H1 (cell line): ENCODE measurements at regions of chr20 and their contacts with region 1.

Region 1: DNA sequence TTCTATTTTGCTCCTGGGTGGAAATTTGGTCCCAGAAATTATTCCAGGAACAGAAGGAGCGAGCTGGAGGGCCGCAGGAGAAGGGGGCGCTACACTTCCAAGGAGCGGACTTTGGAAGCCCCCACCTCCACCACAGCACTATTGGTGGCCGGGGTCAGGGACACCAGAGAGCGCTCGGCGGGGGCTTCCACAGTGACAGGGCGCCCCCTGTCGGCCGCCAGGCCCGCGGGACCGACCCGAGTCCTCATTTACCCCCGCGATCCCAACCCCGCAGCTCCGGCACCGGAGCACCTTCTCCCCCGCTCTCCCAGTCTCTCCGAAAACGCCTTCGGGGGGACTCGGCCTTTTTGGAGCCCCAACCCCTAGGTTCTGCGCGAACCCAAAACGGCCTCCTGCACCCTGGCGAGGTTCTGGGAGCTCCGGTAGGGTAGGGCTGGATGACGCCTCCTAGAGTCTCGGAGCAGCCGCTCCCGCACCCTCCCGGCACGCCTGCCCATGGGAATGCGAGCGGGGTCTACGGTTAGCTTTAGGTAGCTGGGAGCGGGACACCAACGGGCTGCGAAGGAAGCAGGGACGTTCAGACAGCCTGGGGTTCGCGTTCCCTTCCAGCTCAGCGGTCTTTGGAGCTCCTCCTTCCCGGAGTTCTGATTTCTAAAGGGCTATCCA is 2.4 kb upstream of the FOXA2 start:
- DNase-seq: peak in 1 of 2 experiments; percentile 90
- H3K4me3 ChIP-seq: peak overlapping the region in 3 of 4 experiments; percentile 2 to 52 (median 19); a peak in 3 of 8 replicates
- H3K27ac ChIP-seq: no peak overlapping the region
- H3K4me1 ChIP-seq: peaks cover 9 to 21% (median 14%) of the 10 kb centered on the region in 4 experiments
- H3K27me3 ChIP-seq: peaks cover 71 to 89% (median 86%) of the 10 kb centered on the region in 4 experiments
- CTCF ChIP-seq: peak; percentile 76 to 83 (median 83)
- EP300 ChIP-seq: no peak
- POLR2A ChIP-seq: no peak
- RAD21 ChIP-seq: peak; percentile 71 to 78

Region 2: DNA sequence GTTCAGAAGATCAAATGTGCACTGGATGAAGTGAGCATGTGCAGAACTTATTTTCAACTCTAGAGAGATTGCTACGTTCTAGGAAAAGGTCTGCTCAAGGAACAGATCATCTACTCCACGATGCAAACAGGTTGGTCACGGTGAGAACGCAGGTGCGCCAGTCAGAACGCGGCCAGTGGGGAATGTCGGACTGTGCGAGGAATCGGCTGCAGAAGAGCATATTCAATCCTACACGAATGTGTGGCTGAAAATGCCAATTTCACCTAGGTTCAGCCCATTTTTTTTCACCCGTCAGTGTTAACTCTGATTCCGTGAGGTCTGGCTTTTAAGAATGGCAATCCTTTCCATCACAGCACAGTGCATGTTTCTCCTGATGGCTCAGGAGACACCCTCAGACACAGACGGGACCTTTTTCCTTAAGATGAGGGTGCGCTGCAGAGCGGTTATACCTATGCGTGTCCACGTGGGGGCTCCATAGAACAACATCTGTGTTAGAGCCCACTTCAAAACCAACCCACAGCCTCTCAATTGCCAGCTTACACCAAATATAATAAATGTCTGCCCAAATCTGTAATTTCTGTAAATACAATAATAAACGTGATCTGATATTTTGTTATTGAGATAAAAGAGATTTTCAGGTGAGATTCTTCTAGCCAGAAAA is 252.8 kb before region 1 on chr20:
- CTCF ChIA-PET with region 1: interaction called, 82 read pairs
- POLR2A ChIA-PET with region 1: no interaction called
- DNase-seq: peak in 1 of 2 experiments; percentile 69
- H3K4me3 ChIP-seq: no peak overlapping the region
- H3K27ac ChIP-seq: no peak overlapping the region
- H3K4me1 ChIP-seq: no peaks in the 10 kb centered on the region
- H3K27me3 ChIP-seq: peaks cover 0 to 3% (median 0%) of the 10 kb centered on the region in 4 experiments; a peak in 2 of 7 replicates
- CTCF ChIP-seq: peak; percentile 68 to 74 (median 71)
- EP300 ChIP-seq: no peak
- POLR2A ChIP-seq: no peak
- RAD21 ChIP-seq: peak; percentile 83 to 84

Region 3: GRCh38 chr20:22462975-22463914 is 123.5 kb before region 1 on chr20:
- CTCF ChIA-PET with region 1: interaction called, 36 read pairs
- POLR2A ChIA-PET with region 1: no interaction called
- DNase-seq: no peak
- H3K4me3 ChIP-seq: no peak overlapping the region
- H3K27ac ChIP-seq: no peak overlapping the region
- H3K4me1 ChIP-seq: peaks cover 3 to 8% (median 4%) of the 10 kb centered on the region in 4 experiments
- H3K27me3 ChIP-seq: peaks cover 6 to 34% (median 19%) of the 10 kb centered on the region in 4 experiments
- CTCF ChIP-seq: no peak
- EP300 ChIP-seq: no peak
- POLR2A ChIP-seq: no peak
- RAD21 ChIP-seq: no peak

Region 4: DNA sequence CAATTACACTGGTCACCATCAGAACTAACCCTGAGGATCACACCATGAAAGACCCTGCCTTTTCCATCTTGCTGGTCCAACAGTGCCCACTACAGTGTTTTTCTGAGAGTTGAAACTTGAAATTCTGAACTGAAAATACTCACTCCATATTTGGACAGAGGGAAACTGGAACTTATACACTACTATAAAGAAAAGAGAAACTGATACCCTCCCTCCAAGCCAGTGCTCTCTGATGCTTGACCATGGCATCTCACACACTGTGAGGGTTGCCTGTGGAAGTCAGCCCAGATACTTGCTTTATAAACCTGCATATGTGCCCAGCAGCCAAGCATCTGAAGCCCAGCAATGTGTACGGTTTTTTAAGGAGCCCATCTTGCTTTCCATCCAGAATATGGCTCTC is 111.1 kb before region 1 on chr20:
- CTCF ChIA-PET with region 1: no interaction called
- POLR2A ChIA-PET with region 1: no interaction called
- DNase-seq: no peak
- H3K4me3 ChIP-seq: no peak overlapping the region
- H3K27ac ChIP-seq: no peak overlapping the region
- H3K4me1 ChIP-seq: peaks cover 0 to 2% (median 0%) of the 10 kb centered on the region in 4 experiments; a peak in 1 of 7 replicates
- H3K27me3 ChIP-seq: no peaks in the 10 kb centered on the region
- CTCF ChIP-seq: no peak
- EP300 ChIP-seq: no peak
- POLR2A ChIP-seq: no peak
- RAD21 ChIP-seq: no peak

Region 5: DNA sequence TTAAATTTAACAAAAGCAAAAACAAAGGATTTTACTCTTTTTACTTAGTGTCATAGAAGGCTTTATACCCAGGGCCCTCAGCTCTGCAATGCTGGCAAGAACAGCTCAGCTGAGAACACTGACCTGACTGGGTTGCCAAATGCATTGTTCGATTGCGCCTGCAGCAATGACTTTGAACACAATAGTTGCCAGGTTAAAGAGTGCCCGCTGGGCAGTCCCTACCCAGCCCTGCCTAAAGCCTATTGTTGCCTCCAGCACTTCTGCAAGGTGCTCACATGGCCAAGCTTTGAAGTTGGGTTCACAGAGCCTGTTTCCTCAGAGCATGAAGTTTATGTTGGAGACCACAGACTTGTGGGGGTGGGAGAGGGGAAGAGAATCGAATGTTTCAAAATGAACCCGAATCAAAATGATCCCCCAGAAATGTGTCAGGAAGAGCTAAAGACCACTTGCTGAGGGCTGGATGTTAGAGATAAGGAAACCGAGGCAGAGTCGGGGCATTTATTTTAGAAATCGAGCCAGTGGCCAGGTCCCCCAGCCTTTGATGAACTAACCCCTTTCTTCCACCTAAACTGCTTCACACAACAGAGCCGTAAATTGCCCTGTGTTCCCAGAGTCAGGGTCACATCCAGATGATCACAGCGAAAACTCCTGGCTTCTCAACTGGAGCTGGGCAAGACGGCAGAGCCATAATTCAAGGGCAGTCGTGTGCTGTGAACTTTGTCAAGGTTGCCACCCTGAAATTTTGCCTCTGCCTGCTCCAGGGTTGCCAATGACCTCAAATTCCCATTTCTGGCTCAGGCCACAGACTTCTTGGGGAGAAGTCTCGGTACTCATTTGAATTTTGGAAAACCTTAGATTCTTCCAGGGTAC is 57.4 kb before region 1 on chr20:
- CTCF ChIA-PET with region 1: interaction called, 12 read pairs
- POLR2A ChIA-PET with region 1: no interaction called
- DNase-seq: peak in 1 of 2 experiments; percentile 41
- H3K4me3 ChIP-seq: no peak overlapping the region
- H3K27ac ChIP-seq: no peak overlapping the region
- H3K4me1 ChIP-seq: peaks cover 2 to 7% (median 4%) of the 10 kb centered on the region in 4 experiments; a peak in 4 of 7 replicates
- H3K27me3 ChIP-seq: no peaks in the 10 kb centered on the region
- CTCF ChIP-seq: no peak
- EP300 ChIP-seq: no peak
- POLR2A ChIP-seq: no peak
- RAD21 ChIP-seq: no peak

Region 6: GRCh38 chr20:22544462-22544861 is 42.3 kb before region 1 on chr20:
- CTCF ChIA-PET with region 1: no interaction called
- POLR2A ChIA-PET with region 1: no interaction called
- DNase-seq: no peak
- H3K4me3 ChIP-seq: no peak overlapping the region
- H3K27ac ChIP-seq: no peak overlapping the region
- H3K4me1 ChIP-seq: no peaks in the 10 kb centered on the region
- H3K27me3 ChIP-seq: no peaks in the 10 kb centered on the region
- CTCF ChIP-seq: no peak
- EP300 ChIP-seq: no peak
- POLR2A ChIP-seq: no peak
- RAD21 ChIP-seq: no peak

Region 7: GRCh38 chr20:22601361-22602141 is 14.8 kb after region 1 on chr20:
- CTCF ChIA-PET with region 1: interaction called, 43 read pairs
- POLR2A ChIA-PET with region 1: no interaction called
- DNase-seq: no peak
- H3K4me3 ChIP-seq: no peak overlapping the region
- H3K27ac ChIP-seq: no peak overlapping the region
- H3K4me1 ChIP-seq: peaks cover 0 to 3% (median 0%) of the 10 kb centered on the region in 4 experiments; a peak in 1 of 7 replicates
- H3K27me3 ChIP-seq: peaks cover 0 to 3% (median 1%) of the 10 kb centered on the region in 4 experiments; a peak in 2 of 7 replicates
- CTCF ChIP-seq: no peak
- EP300 ChIP-seq: no peak
- POLR2A ChIP-seq: no peak
- RAD21 ChIP-seq: no peak

Region 8: DNA sequence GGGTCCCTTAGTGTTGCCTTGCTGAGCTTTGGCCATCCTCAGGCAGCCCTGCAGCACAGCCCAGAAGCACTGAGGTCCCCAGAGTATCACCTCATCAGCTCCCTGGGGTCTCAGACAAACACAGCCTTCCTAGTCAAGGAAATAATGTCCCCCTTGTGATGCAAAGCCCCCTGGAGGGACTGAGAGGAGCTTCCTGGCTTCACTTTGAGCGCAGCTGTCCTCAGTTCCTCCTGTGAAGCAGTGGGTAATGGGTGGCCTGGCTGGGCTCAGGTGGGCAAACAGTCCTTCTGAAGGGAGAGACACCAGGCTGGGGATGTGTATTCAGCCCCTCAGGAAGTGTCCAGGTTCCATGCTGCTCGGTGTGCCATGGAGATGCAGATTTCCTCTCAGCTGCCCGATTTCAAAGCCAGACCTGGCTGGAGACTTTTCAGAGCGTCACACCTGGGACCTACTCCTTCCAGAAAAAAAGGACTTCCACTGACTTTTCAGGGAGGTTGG is 76.8 kb after region 1 on chr20:
- CTCF ChIA-PET with region 1: interaction called, 11 read pairs
- POLR2A ChIA-PET with region 1: no interaction called
- DNase-seq: peak; percentile 58 to 64
- H3K4me3 ChIP-seq: no peak overlapping the region
- H3K27ac ChIP-seq: no peak overlapping the region
- H3K4me1 ChIP-seq: peaks cover 8 to 14% (median 10%) of the 10 kb centered on the region in 4 experiments; a peak in 6 of 7 replicates
- H3K27me3 ChIP-seq: no peaks in the 10 kb centered on the region
- CTCF ChIP-seq: no peak
- EP300 ChIP-seq: no peak
- POLR2A ChIP-seq: no peak
- RAD21 ChIP-seq: no peak